Aorta (tissue), 5 donors: ENCODE measurements at regions of chr13 and their contacts with region 1.

Region 1: GRCh38 chr13:98672944-98673545 is 79.4 kb downstream of the SLC15A1 start:
- DNase-seq: peak; percentile 72 to 81
- ATAC-seq: peak; percentile 80
- H3K4me3 ChIP-seq: no peak overlapping the region
- H3K27ac ChIP-seq: no peak overlapping the region
- H3K4me1 ChIP-seq: peaks cover 0 to 3% of the 10 kb centered on the region in 2 donors
- H3K27me3 ChIP-seq: no peaks in the 10 kb centered on the region

Region 2: GRCh38 chr13:97855570-97856303 is 817.3 kb before region 1 on chr13:
- intact Hi-C with region 1: loop called in 1 of 2 experiments (anchors 10 kb)
- DNase-seq: peak; percentile 55 to 77
- ATAC-seq: peak; percentile 86
- H3K4me3 ChIP-seq: no peak overlapping the region
- H3K27ac ChIP-seq: no peak overlapping the region
- H3K4me1 ChIP-seq: no peaks in the 10 kb centered on the region
- H3K27me3 ChIP-seq: no peaks in the 10 kb centered on the region

Region 3: GRCh38 chr13:98033277-98034247 is 639.5 kb before region 1 on chr13:
- intact Hi-C with region 1: loop called in 1 of 2 experiments (anchors 10 kb)
- DNase-seq: no peak
- ATAC-seq: no peak
- H3K4me3 ChIP-seq: no peak overlapping the region
- H3K27ac ChIP-seq: no peak overlapping the region
- H3K4me1 ChIP-seq: no peaks in the 10 kb centered on the region
- H3K27me3 ChIP-seq: no peaks in the 10 kb centered on the region

Region 4: DNA sequence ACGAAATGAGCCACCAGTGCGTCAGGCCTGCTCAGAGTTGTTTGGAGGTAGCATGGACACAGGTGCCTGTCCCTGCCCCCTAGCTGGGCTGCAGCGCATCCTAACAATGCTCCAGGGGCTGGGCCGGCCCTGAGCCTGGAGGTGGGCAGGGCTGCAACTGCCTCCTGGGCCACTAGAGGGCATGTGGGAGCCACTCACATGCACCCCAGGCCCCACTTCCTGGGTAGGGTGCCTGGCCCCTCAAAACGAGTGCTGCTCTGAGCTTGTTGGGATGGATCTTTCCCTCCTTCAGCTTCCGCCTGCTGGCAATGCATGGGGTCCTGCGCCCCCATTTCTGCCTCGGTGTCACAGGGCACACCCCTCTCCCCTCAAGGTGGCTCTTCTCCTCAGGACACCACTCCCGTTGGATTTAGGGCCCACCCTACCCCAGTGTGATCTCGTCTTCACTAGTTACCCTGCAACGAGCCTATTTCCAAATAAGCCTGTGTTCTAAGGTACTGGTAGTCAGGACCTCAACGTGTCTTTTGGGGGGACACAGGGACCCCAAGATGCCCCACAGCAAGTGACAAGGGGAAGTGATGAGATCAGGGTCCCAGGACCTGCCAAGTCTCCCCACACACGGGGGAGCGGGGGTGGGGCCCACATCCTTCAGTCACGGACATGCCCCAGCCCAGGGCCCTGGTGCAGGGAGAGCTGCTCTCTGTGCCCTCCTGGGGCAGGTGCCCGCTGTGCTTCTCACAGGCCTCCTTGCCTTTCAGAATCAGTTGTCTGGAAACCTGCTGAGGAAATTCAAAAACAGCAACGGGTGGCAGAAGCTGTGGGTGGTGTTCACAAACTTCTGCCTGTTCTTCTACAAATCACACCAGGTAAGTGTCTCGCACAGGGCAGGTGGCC is 227.5 kb before region 1 on chr13:
- intact Hi-C with region 1: loop called in 1 of 2 experiments (anchors 5 kb)
- DNase-seq: peak; percentile 76 to 91
- ATAC-seq: peak; percentile 87
- H3K4me3 ChIP-seq: no peak overlapping the region
- H3K27ac ChIP-seq: no peak overlapping the region
- H3K4me1 ChIP-seq: no peaks in the 10 kb centered on the region
- H3K27me3 ChIP-seq: no peaks in the 10 kb centered on the region